Tibial artery (tissue), 4 donors: ENCODE measurements at regions of chr3 and their contacts with region 1.

Region 1: GRCh38 chr3:49813497-49814174 is at the start of gene UBA7:
- DNase-seq: peak; percentile 48 to 75
- H3K4me3 ChIP-seq: peak within 1 kb of the TSS; percentile 47 to 61
- H3K27ac ChIP-seq: peak within 1 kb of the TSS; percentile 57 to 77
- H3K4me1 ChIP-seq: peaks cover 0 to 31% (median 20%) of the 10 kb centered on the region in 4 donors
- H3K27me3 ChIP-seq: no peaks in the 10 kb centered on the region
- CTCF ChIP-seq: no peak

Region 2: GRCh38 chr3:49703443-49703927 is 110.2 kb before region 1 on chr3:
- intact Hi-C with region 1: loop called (anchors 10 kb)
- DNase-seq: no peak
- H3K4me3 ChIP-seq: no peak overlapping the region
- H3K27ac ChIP-seq: no peak overlapping the region
- H3K4me1 ChIP-seq: no peaks in the 10 kb centered on the region
- H3K27me3 ChIP-seq: no peaks in the 10 kb centered on the region
- CTCF ChIP-seq: peak; percentile 73 to 78

Region 3: GRCh38 chr3:49929331-49930240 is 116.0 kb after region 1 on chr3 and contains the start of gene MON1A:
- intact Hi-C with region 1: loop called (anchors 10 kb)
- DNase-seq: peak; percentile 95 to 98
- H3K4me3 ChIP-seq: peak within 1 kb of the TSS; percentile 82 to 89
- H3K27ac ChIP-seq: peak within 1 kb of the TSS; percentile 82 to 91
- H3K4me1 ChIP-seq: peaks cover 0 to 26% (median 16%) of the 10 kb centered on the region in 4 donors
- H3K27me3 ChIP-seq: no peaks in the 10 kb centered on the region
- CTCF ChIP-seq: peak; percentile 13 to 20